Caco-2 (cell line): ENCODE measurements at regions of chr16 and their contacts with region 1.

Region 1: GRCh38 chr16:1983544-1984346 is at the start of gene GFER:
- DNase-seq: peak; percentile 91 to 96
- H3K4me3 ChIP-seq: peak within 1 kb of the TSS; percentile 74
- H3K4me3 Mint-ChIP-seq: peak within 1 kb of the TSS; percentile 83
- H3K27ac Mint-ChIP-seq: peak within 1 kb of the TSS; percentile 76
- H3K4me1 ChIP-seq: peaks cover 15% of the 10 kb centered on the region
- H3K4me1 Mint-ChIP-seq: peaks cover 12% of the 10 kb centered on the region
- H3K27me3 ChIP-seq: no peaks in the 10 kb centered on the region
- H3K27me3 Mint-ChIP-seq: no peaks in the 10 kb centered on the region
- CTCF ChIP-seq: peak in 1 of 2 experiments; percentile 33
- total RNA-seq, gene GFER: 57.3 and 57.4 TPM in 2 replicates

Region 2: DNA sequence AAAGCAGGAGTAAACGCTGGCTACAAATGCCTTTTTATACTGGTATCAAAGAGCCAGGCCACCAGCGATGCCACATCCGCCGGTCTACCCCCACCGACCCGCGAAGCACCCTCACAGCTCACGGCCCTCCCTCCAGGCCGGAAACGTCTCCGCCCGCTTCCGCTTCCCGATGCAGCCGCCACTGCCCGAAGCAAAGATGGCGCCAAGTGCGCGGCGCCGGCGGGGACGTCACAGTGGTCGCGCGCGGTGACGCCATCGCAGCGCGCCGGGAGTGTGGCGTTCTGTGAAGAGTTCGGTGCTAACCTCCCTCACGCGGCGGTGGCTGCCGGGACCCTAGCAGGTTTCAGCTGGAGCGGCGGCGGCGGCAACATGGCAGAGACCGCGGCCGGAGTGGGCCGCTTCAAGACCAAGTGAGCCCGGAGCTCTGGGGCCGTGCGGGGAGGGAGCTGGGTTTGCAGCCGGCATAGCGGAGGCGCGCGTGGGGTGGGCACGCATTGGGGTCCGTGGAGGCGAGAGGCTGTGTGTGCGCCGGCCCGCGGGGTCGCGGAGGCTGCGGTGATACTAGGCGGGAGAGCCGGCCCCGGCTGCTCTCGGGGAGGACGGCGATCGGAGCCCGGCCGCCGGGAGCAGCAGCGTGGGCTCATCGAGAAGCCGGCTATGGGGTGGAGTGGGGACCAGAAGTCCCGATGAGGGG is 11.8 kb before region 1 on chr16 and contains the start of gene TBL3:
- CTCF ChIA-PET with region 1: interaction called, 3 read pairs
- POLR2A ChIA-PET with region 1: interaction called, 13 read pairs
- intact Hi-C with region 1: no loop called
- DNase-seq: peak; percentile 92 to 94
- H3K4me3 ChIP-seq: peak within 1 kb of the TSS; percentile 99
- H3K4me3 Mint-ChIP-seq: peak within 1 kb of the TSS; percentile 80
- H3K27ac Mint-ChIP-seq: peak within 1 kb of the TSS; percentile 83
- H3K4me1 ChIP-seq: no peaks in the 10 kb centered on the region
- H3K4me1 Mint-ChIP-seq: peaks cover 9% of the 10 kb centered on the region
- H3K27me3 ChIP-seq: no peaks in the 10 kb centered on the region
- H3K27me3 Mint-ChIP-seq: no peaks in the 10 kb centered on the region
- CTCF ChIP-seq: no peak
- total RNA-seq, gene TBL3: 34.7 and 36.6 TPM in 2 replicates